ENCODE measurements at regions of chr5 and their contacts with region 1.

Region 1: GRCh38 chr5:6246820-6247437 is 131.4 kb downstream of the MED10 start:
- DNase-seq: peak; percentile 23
- ATAC-seq: peak; percentile 71
- H3K4me3 ChIP-seq: no peak overlapping the region
- H3K27ac ChIP-seq: no peak overlapping the region
- H3K4me1 ChIP-seq: 0 out of 2 replicates have a peak, but pooled peaks cover 5% of the 10 kb centered on the region
- H3K27me3 ChIP-seq: no peaks in the 10 kb centered on the region
- CTCF ChIP-seq: no peak
- EP300 ChIP-seq: no peak
- POLR2A ChIP-seq: no peak
- RAD21 ChIP-seq: no peak

Region 2: DNA sequence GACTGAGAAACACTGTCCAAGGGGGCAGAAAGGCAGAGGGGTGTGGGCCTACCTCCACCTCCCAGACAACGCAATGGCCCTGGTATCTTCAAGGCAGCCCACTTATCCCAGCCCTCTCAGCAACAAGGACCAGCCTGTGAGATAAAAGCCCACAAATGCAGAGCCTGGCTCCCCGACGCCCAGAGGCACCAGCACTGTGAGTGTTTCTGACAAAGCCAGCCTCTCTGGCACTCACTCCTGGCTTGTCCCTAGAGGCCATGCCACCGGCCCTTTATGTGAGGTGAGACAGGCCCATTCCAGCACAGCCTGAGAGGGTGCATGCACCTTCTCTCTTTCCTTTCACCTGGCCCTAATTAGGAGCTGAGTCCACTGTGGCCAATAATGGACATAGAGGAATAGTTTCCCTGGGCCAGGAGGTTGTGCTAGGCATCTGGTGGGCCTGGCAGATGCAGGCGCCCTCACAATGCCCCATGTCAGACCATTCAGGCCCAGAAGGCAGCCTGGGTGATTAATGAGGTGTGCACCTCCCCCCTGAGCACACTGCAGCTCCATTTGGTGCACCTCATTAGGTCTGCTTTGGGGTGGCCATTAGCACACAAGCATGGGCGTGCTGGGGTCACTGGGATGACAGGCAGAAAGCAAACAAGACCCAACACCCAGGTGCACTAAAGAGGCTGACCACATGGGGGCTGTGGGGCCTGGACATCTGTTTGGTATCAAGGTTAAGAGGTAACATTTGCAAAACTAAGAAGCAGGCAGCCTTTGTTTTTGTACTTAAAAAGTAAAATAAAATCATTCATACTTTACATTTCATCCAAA is 44.6 kb before region 1 on chr5:
- CTCF ChIA-PET with region 1: no interaction called
- POLR2A ChIA-PET with region 1: interaction called, 3 read pairs
- RAD21 ChIA-PET with region 1: interaction called, 3 read pairs
- SMC1A ChIA-PET with region 1: interaction called, 3 read pairs
- in situ Hi-C with region 1: no loop called
- intact Hi-C with region 1: loop called (anchors 2 kb)
- DNase-seq: no peak
- ATAC-seq: peak; percentile 82
- H3K4me3 ChIP-seq: no peak overlapping the region
- H3K27ac ChIP-seq: no peak overlapping the region
- H3K4me1 ChIP-seq: peaks cover 4% of the 10 kb centered on the region
- H3K27me3 ChIP-seq: no peaks in the 10 kb centered on the region
- CTCF ChIP-seq: peak in 2 of 3 experiments; percentile 12 to 40; a peak in 3 of 6 replicates
- EP300 ChIP-seq: no peak
- POLR2A ChIP-seq: no peak
- RAD21 ChIP-seq: peak; percentile 32; the same call in 1 of the 2 replicates

Region 3: DNA sequence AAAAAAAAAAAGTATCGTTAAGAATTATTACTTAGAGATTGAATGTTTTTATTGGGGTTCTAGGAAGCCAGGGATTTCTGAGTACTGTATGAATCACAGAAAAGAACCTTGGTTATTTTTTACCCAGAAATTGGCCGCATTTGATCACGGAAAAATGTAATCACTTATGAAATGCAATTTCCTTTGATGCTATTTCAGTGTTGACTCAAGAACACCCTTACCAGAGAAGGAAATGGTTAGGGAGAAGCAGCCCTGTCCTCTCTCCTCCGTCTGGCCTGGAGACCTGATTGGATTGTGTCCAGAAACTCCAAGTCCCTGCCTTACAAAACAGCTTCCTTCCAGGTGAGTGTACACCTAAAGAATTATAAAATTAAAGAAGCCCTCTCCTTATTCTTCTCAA is 14.7 kb after region 1 on chr5:
- CTCF ChIA-PET with region 1: interaction called, 3 read pairs
- POLR2A ChIA-PET with region 1: interaction called, 10 read pairs
- RAD21 ChIA-PET with region 1: interaction called, 16 read pairs
- SMC1A ChIA-PET with region 1: interaction called, 31 read pairs
- in situ Hi-C with region 1: no loop called
- intact Hi-C with region 1: no loop called
- DNase-seq: no peak
- ATAC-seq: no peak
- H3K4me3 ChIP-seq: no peak overlapping the region
- H3K27ac ChIP-seq: no peak overlapping the region
- H3K4me1 ChIP-seq: no peaks in the 10 kb centered on the region
- H3K27me3 ChIP-seq: no peaks in the 10 kb centered on the region
- CTCF ChIP-seq: no peak
- EP300 ChIP-seq: no peak
- POLR2A ChIP-seq: no peak
- RAD21 ChIP-seq: no peak

Region 4: DNA sequence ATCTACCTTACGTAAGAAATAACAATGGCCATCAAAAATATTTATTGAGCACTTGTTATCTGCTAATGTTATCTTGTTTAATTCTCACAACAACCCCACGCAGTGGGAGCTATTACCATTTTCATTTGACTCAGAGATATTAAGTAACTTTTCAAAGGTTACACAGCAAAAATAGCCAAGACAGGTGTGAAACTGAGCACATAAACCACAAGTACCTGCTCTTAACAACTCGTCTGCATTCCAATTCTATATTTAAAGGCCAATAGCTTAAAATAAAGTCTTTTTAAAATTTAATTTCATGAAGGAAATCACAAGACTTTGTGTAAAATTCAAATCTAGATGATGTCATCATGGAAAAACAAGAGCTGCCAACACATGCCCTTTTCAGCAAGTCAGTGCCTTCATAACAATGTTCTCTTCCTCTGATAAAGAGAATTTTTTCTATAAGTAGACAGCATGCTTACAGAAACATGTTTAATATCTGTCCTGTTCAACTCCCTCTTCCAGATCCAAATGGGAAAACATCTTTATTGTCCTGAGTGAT is 19.8 kb after region 1 on chr5:
- CTCF ChIA-PET with region 1: interaction called, 3 read pairs
- POLR2A ChIA-PET with region 1: interaction called, 4 read pairs
- RAD21 ChIA-PET with region 1: interaction called, 16 read pairs
- SMC1A ChIA-PET with region 1: interaction called, 31 read pairs
- in situ Hi-C with region 1: no loop called
- intact Hi-C with region 1: no loop called
- DNase-seq: no peak
- ATAC-seq: peak; percentile 43; the same call in 2 of the 3 replicates
- H3K4me3 ChIP-seq: no peak overlapping the region
- H3K27ac ChIP-seq: no peak overlapping the region
- H3K4me1 ChIP-seq: no peaks in the 10 kb centered on the region
- H3K27me3 ChIP-seq: no peaks in the 10 kb centered on the region
- CTCF ChIP-seq: no peak
- EP300 ChIP-seq: no peak
- POLR2A ChIP-seq: no peak
- RAD21 ChIP-seq: no peak

Region 5: GRCh38 chr5:6273090-6273735 is 26.3 kb after region 1 on chr5:
- CTCF ChIA-PET with region 1: interaction called, 3 read pairs
- POLR2A ChIA-PET with region 1: interaction called, 4 read pairs
- RAD21 ChIA-PET with region 1: interaction called, 16 read pairs
- SMC1A ChIA-PET with region 1: interaction called, 31 read pairs
- in situ Hi-C with region 1: no loop called
- intact Hi-C with region 1: no loop called
- DNase-seq: peak; percentile 65
- ATAC-seq: peak; percentile 76
- H3K4me3 ChIP-seq: no peak overlapping the region
- H3K27ac ChIP-seq: peak overlapping the region; percentile 38
- H3K4me1 ChIP-seq: peaks cover 24% of the 10 kb centered on the region
- H3K27me3 ChIP-seq: no peaks in the 10 kb centered on the region
- CTCF ChIP-seq: no peak
- EP300 ChIP-seq: peak in 1 of 2 experiments; percentile 46; a peak in 1 of 4 replicates
- POLR2A ChIP-seq: no peak
- RAD21 ChIP-seq: no peak

Region 6: GRCh38 chr5:7053528-7054209 is 806.7 kb after region 1 on chr5:
- CTCF ChIA-PET with region 1: no interaction called
- POLR2A ChIA-PET with region 1: no interaction called
- RAD21 ChIA-PET with region 1: no interaction called
- SMC1A ChIA-PET with region 1: no interaction called
- in situ Hi-C with region 1: no loop called
- intact Hi-C with region 1: no loop called
- DNase-seq: no peak
- ATAC-seq: no peak
- H3K4me3 ChIP-seq: no peak overlapping the region
- H3K27ac ChIP-seq: no peak overlapping the region
- H3K4me1 ChIP-seq: no peaks in the 10 kb centered on the region
- H3K27me3 ChIP-seq: no peaks in the 10 kb centered on the region
- CTCF ChIP-seq: no peak
- EP300 ChIP-seq: no peak
- POLR2A ChIP-seq: no peak
- RAD21 ChIP-seq: no peak

Measured in GM12878 (cell line).